Activated naive CD4-positive, alpha-beta T cell treated with anti-CD3 and anti-CD28 coated beads for 36 hours (primary cell): ENCODE measurements at regions of chr1 and their contacts with region 1.

Region 1: DNA sequence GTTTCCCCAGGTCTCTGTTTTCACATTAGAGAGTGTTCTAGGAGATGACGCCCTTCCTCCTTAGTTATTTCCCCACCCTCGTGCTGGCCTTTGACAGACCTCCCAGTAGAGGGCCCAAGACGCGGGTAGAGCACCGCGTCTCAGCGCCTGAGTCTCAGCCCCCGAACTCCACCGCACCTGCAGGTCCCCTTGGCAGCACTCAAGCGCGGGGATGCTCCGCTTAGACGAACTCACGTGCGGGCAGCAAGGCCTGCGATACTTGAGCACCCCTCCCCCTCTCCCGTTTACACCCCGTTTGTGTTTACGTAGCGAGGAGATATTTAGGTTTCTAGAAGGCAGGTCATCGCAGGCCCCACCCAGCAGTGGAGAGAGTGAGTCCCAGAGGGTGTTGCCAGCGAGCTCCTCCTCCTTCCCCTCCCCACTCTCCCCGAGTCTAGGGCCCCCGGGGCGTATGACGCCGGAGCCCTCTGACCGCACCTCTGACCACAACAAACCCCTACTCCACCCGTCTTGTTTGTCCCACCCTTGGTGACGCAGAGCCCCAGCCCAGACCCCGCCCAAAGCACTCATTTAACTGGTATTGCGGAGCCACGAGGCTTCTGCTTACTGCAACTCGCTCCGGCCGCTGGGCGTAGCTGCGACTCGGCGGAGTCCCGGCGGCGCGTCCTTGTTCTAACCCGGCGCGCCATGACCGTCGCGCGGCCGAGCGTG is at the start of gene CD55:
- DNase-seq: peak; percentile 99
- H3K4me3 Mint-ChIP-seq: peak within 1 kb of the TSS; percentile 96
- H3K27ac Mint-ChIP-seq: peak within 1 kb of the TSS; percentile 98
- H3K4me1 Mint-ChIP-seq: peaks cover 34% of the 10 kb centered on the region
- H3K27me3 Mint-ChIP-seq: no peaks in the 10 kb centered on the region
- total RNA-seq, gene CD55: 62.1 to 66.0 TPM

Region 2: DNA sequence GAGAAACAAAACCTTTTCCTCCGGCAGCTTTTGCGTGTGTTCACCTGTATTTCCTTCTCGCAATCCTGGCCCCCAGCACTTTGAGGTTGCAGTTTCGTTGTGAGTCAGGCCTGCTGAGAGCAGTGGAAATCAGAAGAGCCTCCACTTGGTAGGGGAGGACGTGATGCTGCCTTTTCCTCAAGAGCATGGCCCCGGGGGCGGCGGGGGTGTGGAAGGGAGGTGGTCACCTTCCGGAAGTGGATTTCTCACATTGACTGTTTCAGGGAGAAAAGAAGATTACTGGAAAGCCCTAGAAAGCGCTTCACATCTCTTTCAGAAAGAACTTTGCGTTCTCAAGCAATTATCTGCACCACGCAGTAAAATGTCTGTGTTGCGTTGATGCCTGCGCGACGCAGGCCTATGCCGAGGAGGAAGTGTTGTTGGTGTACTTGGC is 536.7 kb before region 1 on chr1:
- CTCF ChIA-PET with region 1: no interaction called
- intact Hi-C with region 1: loop called (anchors 10 kb)
- DNase-seq: peak; percentile 98
- H3K4me3 Mint-ChIP-seq: no peak overlapping the region
- H3K27ac Mint-ChIP-seq: peak overlapping the region; percentile 62
- H3K4me1 Mint-ChIP-seq: peaks cover 50% of the 10 kb centered on the region
- H3K27me3 Mint-ChIP-seq: peaks cover 7% of the 10 kb centered on the region

Region 3: GRCh38 chr1:207084701-207085180 is 236.5 kb before region 1 on chr1:
- CTCF ChIA-PET with region 1: interaction called, 4 read pairs
- intact Hi-C with region 1: loop called (anchors 1 kb)
- DNase-seq: peak; percentile 73
- H3K4me3 Mint-ChIP-seq: no peak overlapping the region
- H3K27ac Mint-ChIP-seq: no peak overlapping the region
- H3K4me1 Mint-ChIP-seq: peaks cover 23% of the 10 kb centered on the region
- H3K27me3 Mint-ChIP-seq: no peaks in the 10 kb centered on the region

Region 4: GRCh38 chr1:207362962-207363858 is 42.0 kb after region 1 on chr1:
- CTCF ChIA-PET with region 1: interaction called, 3 read pairs
- intact Hi-C with region 1: loop called (anchors 1 kb)
- DNase-seq: peak; percentile 39
- H3K4me3 Mint-ChIP-seq: no peak overlapping the region
- H3K27ac Mint-ChIP-seq: no peak overlapping the region
- H3K4me1 Mint-ChIP-seq: peaks cover 5% of the 10 kb centered on the region
- H3K27me3 Mint-ChIP-seq: no peaks in the 10 kb centered on the region

Region 5: GRCh38 chr1:207412845-207413244 is 91.6 kb after region 1 on chr1:
- CTCF ChIA-PET with region 1: no interaction called
- intact Hi-C with region 1: loop called (anchors 1 kb)
- DNase-seq: no peak
- H3K4me3 Mint-ChIP-seq: no peak overlapping the region
- H3K27ac Mint-ChIP-seq: peak overlapping the region; percentile 52
- H3K4me1 Mint-ChIP-seq: peaks cover 44% of the 10 kb centered on the region
- H3K27me3 Mint-ChIP-seq: peaks cover 2% of the 10 kb centered on the region

Region 6: GRCh38 chr1:207828485-207829158 is 507.4 kb after region 1 on chr1:
- CTCF ChIA-PET with region 1: no interaction called
- intact Hi-C with region 1: loop called (anchors 1 kb)
- DNase-seq: peak; percentile 79
- H3K4me3 Mint-ChIP-seq: no peak overlapping the region
- H3K27ac Mint-ChIP-seq: peak overlapping the region; percentile 63
- H3K4me1 Mint-ChIP-seq: peaks cover 98% of the 10 kb centered on the region
- H3K27me3 Mint-ChIP-seq: no peaks in the 10 kb centered on the region